Left ventricle myocardium inferior (tissue), 1 donor: ENCODE measurements at regions of chr4 and their contacts with region 1.

Region 1: DNA sequence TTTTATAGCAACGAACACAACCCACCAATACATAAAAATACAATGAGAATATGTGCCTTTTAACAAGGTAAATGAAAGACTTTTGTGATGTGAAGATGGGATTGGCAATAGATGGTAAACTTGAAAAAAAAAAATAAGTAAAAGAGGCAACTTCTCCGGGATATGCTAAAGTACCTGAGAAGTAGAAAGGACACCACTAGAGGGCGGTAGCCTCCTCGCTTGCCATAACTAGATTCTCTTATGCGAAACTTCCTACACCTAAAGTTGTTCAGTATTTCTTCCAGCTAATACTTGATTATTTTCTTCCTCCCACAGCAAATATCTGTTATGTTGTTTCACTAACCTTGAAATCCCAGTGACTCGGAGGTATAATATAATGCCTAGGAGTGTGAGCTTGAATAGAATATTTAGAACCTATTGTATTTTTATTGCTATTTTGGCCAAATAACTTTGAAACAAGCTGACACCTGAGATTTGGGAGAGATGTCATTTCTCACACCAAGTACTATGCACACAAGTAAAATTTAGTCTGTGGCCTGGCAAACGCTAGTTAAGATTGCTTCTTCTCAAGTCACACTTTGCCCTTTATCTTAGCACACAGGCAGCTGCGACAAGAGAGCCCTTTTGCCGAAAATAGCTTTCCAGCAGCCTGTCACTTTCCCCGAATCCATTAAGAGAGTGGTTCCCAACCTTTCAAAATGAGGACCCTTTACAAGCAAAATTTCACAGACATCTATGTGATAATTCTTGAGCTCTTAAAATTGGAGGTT is 44.9 kb upstream of the PDLIM5 start:
- DNase-seq: peak; percentile 43
- H3K4me3 ChIP-seq: peak overlapping the region; percentile 26
- H3K27ac ChIP-seq: peak overlapping the region; percentile 89
- H3K4me1 ChIP-seq: peaks cover 66% of the 10 kb centered on the region
- H3K27me3 ChIP-seq: no peaks in the 10 kb centered on the region
- CTCF ChIP-seq: peak; percentile 91

Region 2: DNA sequence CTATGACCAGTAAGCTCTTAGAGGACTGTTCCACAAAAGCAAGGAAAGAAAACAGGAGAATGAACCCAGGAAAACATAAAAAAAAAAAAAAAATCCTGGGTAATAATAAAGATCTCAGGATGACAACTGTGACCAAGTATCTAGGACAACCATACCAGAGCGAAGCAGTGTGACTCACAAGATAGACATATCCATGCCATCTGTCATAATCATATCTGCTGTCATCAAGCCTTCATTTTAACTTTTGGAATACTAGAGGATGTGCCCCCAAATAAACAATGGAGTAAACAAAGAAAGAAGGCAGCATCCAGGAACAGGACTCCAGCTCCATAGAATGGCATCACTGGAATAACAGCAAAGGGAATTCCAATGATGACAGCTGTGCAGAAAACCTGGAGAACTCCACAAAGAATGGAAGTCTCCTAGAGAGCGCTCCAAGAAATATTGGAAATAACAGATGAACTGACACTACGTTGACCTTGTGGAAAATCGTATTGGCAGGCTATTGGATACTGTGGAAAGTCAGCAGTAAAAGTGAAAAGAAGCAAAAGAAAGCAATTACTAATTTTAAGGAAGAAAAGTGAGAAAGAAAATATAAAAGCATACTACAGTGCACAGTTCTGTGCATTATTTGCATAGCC is 99.5 kb before region 1 on chr4:
- intact Hi-C with region 1: no loop called
- DNase-seq: no peak
- H3K4me3 ChIP-seq: no peak overlapping the region
- H3K27ac ChIP-seq: no peak overlapping the region
- H3K4me1 ChIP-seq: peaks cover 8% of the 10 kb centered on the region
- H3K27me3 ChIP-seq: no peaks in the 10 kb centered on the region
- CTCF ChIP-seq: no peak

Region 3: DNA sequence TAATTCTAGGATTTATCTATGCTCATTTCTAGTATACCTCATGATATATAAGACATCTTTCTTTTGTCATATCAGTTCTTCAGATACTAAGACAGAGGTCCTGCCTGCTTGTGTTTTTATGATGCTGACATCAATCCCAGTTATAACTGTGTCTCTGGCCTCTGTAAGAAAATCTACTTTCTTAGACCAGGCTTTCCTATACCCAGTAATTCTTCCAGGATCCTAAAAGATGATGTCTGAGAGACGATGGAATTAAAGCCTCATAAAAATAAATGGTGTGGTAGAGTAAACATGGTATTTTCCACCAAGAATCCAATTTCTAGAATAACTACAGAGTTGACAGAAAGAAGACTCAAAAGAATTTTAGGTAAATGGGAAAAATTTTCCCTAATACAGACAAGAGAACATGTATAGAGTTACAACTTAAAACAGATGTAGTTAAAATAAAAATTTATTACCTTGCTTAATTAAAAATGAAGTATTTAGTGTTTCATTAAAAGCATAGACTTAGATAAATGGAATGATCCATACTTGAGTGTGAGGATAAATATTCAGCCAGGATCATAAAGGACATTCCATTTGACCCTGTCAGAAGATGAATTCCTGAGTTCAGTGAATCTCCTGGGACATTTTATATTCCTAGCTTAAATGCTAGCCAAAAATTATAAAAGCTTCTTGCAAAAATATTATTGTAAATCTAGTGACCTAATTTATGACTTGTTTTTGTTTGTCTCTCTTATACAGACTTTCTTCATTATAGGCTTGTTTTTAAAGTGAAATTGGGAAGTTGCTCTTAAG is 182.2 kb after region 1 on chr4:
- intact Hi-C with region 1: loop called (anchors 2 kb)
- DNase-seq: no peak
- H3K4me3 ChIP-seq: no peak overlapping the region
- H3K27ac ChIP-seq: no peak overlapping the region
- H3K4me1 ChIP-seq: peaks cover 75% of the 10 kb centered on the region
- H3K27me3 ChIP-seq: no peaks in the 10 kb centered on the region
- CTCF ChIP-seq: no peak

Region 4: DNA sequence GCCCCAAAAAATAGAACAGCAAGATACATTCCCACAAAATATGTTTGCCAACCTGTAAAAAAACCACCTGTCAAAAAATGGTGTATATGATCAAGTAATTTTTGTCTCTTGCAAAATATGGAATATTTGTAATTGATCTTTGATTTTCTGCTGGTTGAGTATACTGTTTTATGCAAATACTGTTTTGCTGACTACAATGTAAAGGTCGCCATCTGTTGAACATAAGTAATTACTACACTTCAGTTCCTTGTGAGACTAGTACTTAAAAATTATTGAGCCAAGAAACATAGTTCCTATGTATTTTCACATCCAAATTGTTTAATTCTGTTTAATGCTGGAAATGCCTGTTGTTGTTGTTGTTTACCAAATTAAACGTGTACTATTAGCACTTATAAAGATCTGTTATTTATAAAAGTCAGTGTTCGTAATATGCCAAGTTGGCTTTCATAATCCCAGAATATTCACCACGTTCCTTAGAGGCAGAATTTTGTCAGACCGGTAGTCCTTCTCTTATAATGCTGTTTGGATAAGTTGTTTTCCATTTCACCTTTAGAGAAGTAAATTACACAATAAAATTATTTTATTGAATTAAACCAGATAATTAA is 189.1 kb after region 1 on chr4:
- intact Hi-C with region 1: loop called (anchors 2 kb)
- DNase-seq: no peak
- H3K4me3 ChIP-seq: no peak overlapping the region
- H3K27ac ChIP-seq: no peak overlapping the region
- H3K4me1 ChIP-seq: peaks cover 51% of the 10 kb centered on the region
- H3K27me3 ChIP-seq: no peaks in the 10 kb centered on the region
- CTCF ChIP-seq: peak; percentile 73